ENCODE measurements at regions of chr17 and their contacts with region 1.

Region 1: DNA sequence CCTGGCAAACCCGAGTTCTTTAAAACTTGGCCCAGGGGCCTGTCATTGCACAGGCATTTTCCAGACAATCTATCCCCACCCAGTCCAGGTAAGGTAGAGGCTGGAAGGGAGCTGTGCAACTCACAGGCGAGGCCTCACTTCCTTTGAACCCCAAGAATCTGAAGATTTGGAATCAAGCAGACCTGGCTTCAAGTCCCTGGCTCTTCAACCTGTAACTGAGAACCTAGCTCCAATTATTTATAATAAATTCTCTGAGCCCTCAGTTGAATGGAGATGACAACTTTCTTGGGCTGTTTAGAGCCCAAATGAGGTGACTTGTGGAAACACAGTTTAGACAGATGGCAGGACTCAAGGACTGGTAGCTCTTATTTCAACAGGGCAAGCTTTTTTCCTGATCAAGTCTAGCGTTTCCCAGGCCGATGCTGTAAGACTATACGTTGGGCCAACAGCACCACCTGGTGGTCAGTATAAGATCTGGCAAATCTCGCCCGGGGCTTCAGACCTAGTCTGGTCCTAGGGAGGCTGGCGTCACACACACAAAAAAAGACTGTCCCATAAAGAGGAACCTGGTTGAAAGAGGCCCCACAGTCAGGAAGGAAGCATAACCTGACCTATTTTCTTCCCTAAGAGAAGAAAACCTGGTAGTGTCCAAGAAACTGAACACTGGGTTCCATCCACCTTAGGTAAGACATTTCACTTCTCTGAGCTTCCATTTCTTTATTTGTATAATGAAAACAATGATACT is 117.9 kb downstream of the C17orf67 start:
- DNase-seq: peak; percentile 90
- ATAC-seq: peak; percentile 99
- H3K4me3 Mint-ChIP-seq: no peak overlapping the region
- H3K27ac Mint-ChIP-seq: no peak overlapping the region
- H3K4me1 Mint-ChIP-seq: no peaks in the 10 kb centered on the region
- H3K27me3 Mint-ChIP-seq: no peaks in the 10 kb centered on the region
- CTCF ChIP-seq: peak; percentile 83

Region 2: GRCh38 chr17:56499799-56500388 is 215.9 kb before region 1 on chr17:
- CTCF ChIA-PET with region 1: interaction called, 61 read pairs
- POLR2A ChIA-PET with region 1: no interaction called
- intact Hi-C with region 1: loop called (anchors 5 kb)
- DNase-seq: peak; percentile 58
- ATAC-seq: no peak
- H3K4me3 Mint-ChIP-seq: no peak overlapping the region
- H3K27ac Mint-ChIP-seq: no peak overlapping the region
- H3K4me1 Mint-ChIP-seq: no peaks in the 10 kb centered on the region
- H3K27me3 Mint-ChIP-seq: no peaks in the 10 kb centered on the region
- CTCF ChIP-seq: peak; percentile 66

Region 3: GRCh38 chr17:56592487-56593085 is 123.2 kb before region 1 on chr17:
- CTCF ChIA-PET with region 1: interaction called, 106 read pairs
- POLR2A ChIA-PET with region 1: interaction called, 9 read pairs
- intact Hi-C with region 1: loop called (anchors 2 kb)
- DNase-seq: peak; percentile 70
- ATAC-seq: peak; percentile 65
- H3K4me3 Mint-ChIP-seq: peak overlapping the region; percentile 73
- H3K27ac Mint-ChIP-seq: no peak overlapping the region
- H3K4me1 Mint-ChIP-seq: peaks cover 14% of the 10 kb centered on the region
- H3K27me3 Mint-ChIP-seq: peaks cover 18% of the 10 kb centered on the region
- CTCF ChIP-seq: peak; percentile 94

Region 4: GRCh38 chr17:56661916-56662315 is 53.9 kb before region 1 on chr17:
- CTCF ChIA-PET with region 1: interaction called, 13 read pairs
- POLR2A ChIA-PET with region 1: no interaction called
- intact Hi-C with region 1: no loop called
- DNase-seq: no peak
- ATAC-seq: no peak
- H3K4me3 Mint-ChIP-seq: no peak overlapping the region
- H3K27ac Mint-ChIP-seq: no peak overlapping the region
- H3K4me1 Mint-ChIP-seq: no peaks in the 10 kb centered on the region
- H3K27me3 Mint-ChIP-seq: peaks cover 4% of the 10 kb centered on the region
- CTCF ChIP-seq: no peak

Region 5: DNA sequence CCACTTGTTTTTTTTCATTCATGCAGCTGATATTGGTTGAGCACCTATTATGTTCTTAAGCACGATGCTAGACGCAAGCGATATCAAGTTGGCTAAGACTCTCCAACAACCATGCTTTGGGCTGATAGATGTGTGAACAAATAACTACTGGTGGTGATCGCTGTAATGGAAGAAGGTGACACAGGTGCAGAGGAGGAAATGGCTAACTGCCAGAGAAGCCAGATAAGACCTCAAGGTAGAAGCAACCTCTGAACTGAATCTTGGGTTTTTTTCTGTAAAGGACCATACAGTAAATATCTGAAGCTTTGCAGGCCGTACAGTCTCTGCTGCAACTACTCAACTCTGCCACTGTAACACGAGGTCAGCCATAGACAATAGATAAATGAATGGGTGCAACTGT is 20.1 kb after region 1 on chr17:
- CTCF ChIA-PET with region 1: interaction called, 11 read pairs
- POLR2A ChIA-PET with region 1: no interaction called
- intact Hi-C with region 1: no loop called
- DNase-seq: no peak
- ATAC-seq: no peak
- H3K4me3 Mint-ChIP-seq: no peak overlapping the region
- H3K27ac Mint-ChIP-seq: no peak overlapping the region
- H3K4me1 Mint-ChIP-seq: no peaks in the 10 kb centered on the region
- H3K27me3 Mint-ChIP-seq: peaks cover 3% of the 10 kb centered on the region
- CTCF ChIP-seq: no peak

Region 6: DNA sequence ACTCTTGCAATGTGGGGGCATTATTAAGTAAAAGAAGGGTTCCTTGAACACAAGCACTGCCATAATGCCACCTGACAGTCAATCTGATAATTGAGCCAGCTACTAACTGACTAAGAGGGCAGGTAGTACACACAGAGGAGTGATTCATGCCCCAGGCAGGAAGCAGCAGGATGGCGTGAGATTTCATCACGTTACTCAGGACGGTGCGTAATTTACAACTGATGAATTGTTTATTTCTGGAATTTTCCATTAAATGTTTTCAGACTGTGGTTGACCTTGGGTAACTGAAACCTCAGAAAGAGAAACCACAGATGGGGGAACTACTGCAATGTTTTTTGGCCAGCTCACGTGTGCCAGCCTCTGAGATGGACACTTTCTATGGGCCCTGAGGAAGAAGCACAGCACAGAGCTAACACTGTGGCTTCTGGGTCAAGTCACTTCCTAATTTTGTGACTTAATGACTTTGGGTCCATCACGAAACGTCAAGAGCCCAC is 71.3 kb after region 1 on chr17:
- CTCF ChIA-PET with region 1: interaction called, 55 read pairs
- POLR2A ChIA-PET with region 1: interaction called, 3 read pairs
- intact Hi-C with region 1: no loop called
- DNase-seq: peak; percentile 87
- ATAC-seq: peak; percentile 98
- H3K4me3 Mint-ChIP-seq: peak overlapping the region; percentile 44
- H3K27ac Mint-ChIP-seq: peak overlapping the region; percentile 95
- H3K4me1 Mint-ChIP-seq: peaks cover 34% of the 10 kb centered on the region
- H3K27me3 Mint-ChIP-seq: no peaks in the 10 kb centered on the region
- CTCF ChIP-seq: no peak

Measured in activated CD8-positive, alpha-beta T cell treated with anti-CD3 and anti-CD28 coated beads for 36 hours (primary cell).